Activated B cell treated with CpG ODN at 0.5 μM for 24 hours (primary cell): ENCODE measurements at regions of chr17 and their contacts with region 1.

Region 1: DNA sequence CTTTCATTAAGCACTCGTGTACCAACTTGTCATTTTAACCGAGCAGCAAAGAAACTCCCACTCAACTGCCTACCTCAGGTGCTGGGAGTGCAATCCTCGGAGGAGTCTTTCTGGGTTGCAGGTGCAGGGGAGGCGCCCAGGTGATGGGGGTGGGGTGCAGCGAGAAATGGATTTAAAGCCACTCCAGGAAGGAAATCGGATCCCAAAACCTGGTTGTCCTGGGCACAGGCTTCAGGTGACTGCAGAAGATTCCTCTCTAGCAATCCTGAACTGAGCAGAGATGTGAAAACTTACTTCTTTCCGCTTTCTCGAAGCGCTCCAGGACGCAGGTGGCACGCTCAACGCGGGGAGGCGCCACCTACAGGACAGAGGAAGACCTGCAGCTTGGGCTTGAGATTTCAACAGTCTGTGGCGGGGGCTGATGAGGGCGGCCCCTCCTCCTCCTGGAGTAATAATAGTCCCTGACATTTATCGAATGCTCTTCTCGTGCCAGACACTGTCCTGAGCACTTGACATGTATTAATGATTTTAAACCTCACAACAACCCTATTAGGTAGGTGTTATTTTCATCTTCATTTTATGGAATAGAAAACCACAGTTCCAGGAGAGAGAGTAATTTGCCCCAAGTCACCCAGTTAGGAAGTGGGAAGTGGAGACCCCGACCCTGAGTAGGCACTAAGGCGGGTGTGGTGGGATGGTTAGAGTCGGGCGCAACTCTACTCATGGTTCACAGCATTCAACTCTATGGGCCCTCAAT is 27.2 kb upstream of the SKAP1 start:
- DNase-seq: peak; percentile 60
- ATAC-seq: peak; percentile 100
- H3K4me3 Mint-ChIP-seq: peak overlapping the region; percentile 50
- H3K27ac Mint-ChIP-seq: no peak overlapping the region
- H3K4me1 Mint-ChIP-seq: peaks cover 35% of the 10 kb centered on the region
- H3K27me3 Mint-ChIP-seq: peaks cover 5% of the 10 kb centered on the region
- CTCF ChIP-seq: peak; percentile 88

Region 2: DNA sequence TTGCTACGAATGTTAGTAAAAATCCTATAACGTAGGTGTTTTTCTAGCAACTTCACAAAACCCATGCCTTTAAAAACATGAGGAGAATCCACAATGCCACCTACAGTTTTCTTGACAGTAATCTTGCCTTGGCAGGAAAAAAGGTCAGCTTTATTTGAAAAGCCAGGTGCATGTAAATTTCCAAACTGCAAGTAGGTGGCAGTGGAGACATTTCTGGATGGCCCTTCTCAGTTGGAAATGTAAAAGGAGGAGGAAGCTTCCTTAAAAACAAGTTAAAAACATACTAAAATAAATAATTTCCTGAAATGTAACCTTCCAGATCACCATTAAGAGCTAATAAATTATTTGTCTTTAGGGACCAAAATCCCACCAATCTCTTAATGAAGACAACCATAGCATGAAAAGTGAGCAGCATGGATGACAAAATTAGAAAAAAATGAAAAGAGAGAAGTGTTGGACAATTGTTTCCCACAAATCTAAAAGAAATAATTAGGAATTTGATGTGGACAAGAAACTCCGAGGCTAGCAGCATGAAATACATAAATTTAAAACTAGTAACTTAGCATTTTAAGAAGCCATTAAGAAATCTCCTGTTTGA is 197.5 kb before region 1 on chr17:
- CTCF ChIA-PET with region 1: no interaction called
- POLR2A ChIA-PET with region 1: no interaction called
- intact Hi-C with region 1: no loop called
- DNase-seq: no peak
- ATAC-seq: no peak
- H3K4me3 Mint-ChIP-seq: no peak overlapping the region
- H3K27ac Mint-ChIP-seq: no peak overlapping the region
- H3K4me1 Mint-ChIP-seq: no peaks in the 10 kb centered on the region
- H3K27me3 Mint-ChIP-seq: no peaks in the 10 kb centered on the region
- CTCF ChIP-seq: no peak

Region 3: DNA sequence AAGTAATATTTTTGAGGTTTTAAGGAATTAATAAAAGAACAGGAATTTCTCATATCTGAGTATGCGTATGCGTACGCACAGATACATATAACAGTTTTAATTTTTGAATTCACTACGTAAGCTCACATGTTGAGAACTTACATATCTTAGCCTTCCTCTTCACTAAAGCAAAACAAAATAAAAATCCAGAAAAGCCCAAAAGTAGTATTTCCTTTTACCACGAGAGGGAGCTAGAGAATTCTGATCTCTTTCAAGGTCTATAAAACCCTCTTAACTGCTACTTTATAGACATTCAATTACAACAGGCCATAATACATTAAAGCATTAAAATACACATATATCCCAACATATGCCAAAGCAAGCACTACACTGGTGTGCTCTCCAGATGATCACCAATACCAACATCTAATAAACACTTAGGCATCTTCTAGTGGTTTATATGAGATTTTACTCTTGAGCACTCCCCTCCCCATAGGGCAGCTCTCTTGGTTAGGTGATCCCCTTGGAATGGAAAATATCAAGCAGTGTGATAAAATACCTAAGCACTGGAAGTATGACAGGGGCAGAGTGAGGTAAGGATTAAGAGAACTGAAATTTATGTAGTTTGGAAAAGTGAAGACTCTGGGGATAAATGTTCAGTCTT is 121.3 kb before region 1 on chr17:
- CTCF ChIA-PET with region 1: interaction called, 9 read pairs
- POLR2A ChIA-PET with region 1: no interaction called
- intact Hi-C with region 1: loop called (anchors 1 kb)
- DNase-seq: no peak
- ATAC-seq: peak; percentile 47
- H3K4me3 Mint-ChIP-seq: no peak overlapping the region
- H3K27ac Mint-ChIP-seq: no peak overlapping the region
- H3K4me1 Mint-ChIP-seq: no peaks in the 10 kb centered on the region
- H3K27me3 Mint-ChIP-seq: no peaks in the 10 kb centered on the region
- CTCF ChIP-seq: peak; percentile 60

Region 4: DNA sequence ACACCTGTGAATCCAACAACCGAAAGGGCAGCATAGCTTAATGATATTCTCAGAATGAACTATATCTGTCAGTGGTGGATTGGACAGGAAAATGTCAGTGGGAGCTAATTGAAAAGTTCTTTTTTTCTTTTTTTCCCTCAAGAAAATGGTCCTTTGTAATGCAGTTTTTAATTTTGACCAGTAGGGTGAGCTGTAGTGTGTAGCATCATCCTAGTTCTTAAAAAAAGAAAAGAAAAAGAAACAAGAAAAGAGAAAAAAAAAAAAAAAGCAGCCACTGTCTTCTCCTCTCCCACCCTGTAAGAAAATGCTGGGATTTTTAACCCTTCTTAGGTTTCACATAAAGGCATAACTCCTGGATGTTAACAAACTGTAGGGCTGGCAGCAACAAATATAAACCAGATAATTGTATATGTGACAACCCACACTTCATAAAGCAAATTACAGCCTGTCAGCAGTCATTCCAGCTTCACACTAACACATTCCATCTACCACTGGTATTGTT is 105.4 kb before region 1 on chr17:
- CTCF ChIA-PET with region 1: interaction called, 45 read pairs
- POLR2A ChIA-PET with region 1: interaction called, 3 read pairs
- intact Hi-C with region 1: loop called (anchors 1 kb)
- DNase-seq: no peak
- ATAC-seq: peak; percentile 57
- H3K4me3 Mint-ChIP-seq: no peak overlapping the region
- H3K27ac Mint-ChIP-seq: no peak overlapping the region
- H3K4me1 Mint-ChIP-seq: peaks cover 3% of the 10 kb centered on the region
- H3K27me3 Mint-ChIP-seq: no peaks in the 10 kb centered on the region
- CTCF ChIP-seq: peak; percentile 33

Region 5: GRCh38 chr17:48374650-48375230 is 82.5 kb before region 1 on chr17:
- CTCF ChIA-PET with region 1: interaction called, 10 read pairs
- POLR2A ChIA-PET with region 1: no interaction called
- intact Hi-C with region 1: no loop called
- DNase-seq: no peak
- ATAC-seq: peak; percentile 51
- H3K4me3 Mint-ChIP-seq: no peak overlapping the region
- H3K27ac Mint-ChIP-seq: peak overlapping the region; percentile 80
- H3K4me1 Mint-ChIP-seq: peaks cover 23% of the 10 kb centered on the region
- H3K27me3 Mint-ChIP-seq: no peaks in the 10 kb centered on the region
- CTCF ChIP-seq: no peak

Region 6: GRCh38 chr17:48413613-48414405 is 43.4 kb before region 1 on chr17:
- CTCF ChIA-PET with region 1: interaction called, 8 read pairs
- POLR2A ChIA-PET with region 1: no interaction called
- intact Hi-C with region 1: loop called (anchors 2 kb)
- DNase-seq: no peak
- ATAC-seq: peak; percentile 83
- H3K4me3 Mint-ChIP-seq: peak overlapping the region; percentile 57
- H3K27ac Mint-ChIP-seq: peak overlapping the region; percentile 88
- H3K4me1 Mint-ChIP-seq: peaks cover 60% of the 10 kb centered on the region
- H3K27me3 Mint-ChIP-seq: peaks cover 2% of the 10 kb centered on the region
- CTCF ChIP-seq: no peak

Region 7: DNA sequence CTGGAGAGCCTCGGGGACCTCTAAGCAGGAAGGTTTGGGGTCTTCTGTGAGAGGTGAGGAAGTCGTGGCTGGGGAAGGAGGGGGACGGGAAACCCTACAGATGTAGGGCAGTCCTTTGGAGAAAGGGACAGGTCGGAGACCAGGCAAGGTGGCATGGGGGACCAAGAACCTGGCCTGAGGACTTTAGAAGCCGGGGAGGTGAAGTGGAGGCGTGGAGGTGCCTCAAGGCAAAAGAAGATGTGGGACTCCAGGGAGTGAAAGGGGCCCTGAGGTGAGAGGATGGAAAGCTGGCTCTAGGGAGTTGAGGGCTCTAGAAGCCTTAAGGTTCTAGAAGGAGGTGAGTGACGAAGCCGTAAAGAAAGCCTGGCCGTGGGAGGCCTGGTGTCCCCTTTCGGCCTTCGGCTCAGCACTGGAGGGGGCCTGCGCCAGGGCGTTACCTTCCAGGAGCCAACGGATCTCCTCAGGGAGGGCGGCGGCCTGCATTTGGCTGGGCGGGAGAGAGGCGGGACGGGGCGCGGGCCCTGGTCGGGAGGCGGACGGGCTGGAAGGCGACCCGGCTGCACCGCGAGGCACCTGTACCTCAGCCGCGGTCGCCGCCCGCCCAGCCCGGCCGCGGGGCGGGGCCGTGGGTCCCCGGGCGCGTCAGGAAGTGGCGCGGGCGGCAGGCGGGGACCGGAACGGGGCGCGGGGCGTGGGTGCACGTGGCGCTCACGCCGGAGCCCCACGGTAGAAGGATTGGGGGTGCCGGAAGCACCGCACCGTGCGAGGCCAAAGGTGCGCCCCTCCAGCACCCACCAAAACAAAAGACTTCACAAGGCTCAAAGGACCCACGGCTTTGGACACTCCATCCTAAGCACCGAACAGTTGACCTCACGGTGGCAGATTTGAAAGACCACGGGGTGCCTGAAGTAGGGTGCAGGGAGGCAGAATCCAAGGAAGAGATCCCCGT is 27.3 kb before region 1 on chr17 and contains the start of gene SKAP1:
- CTCF ChIA-PET with region 1: interaction called, 4 read pairs
- POLR2A ChIA-PET with region 1: no interaction called
- intact Hi-C with region 1: loop called (anchors 1 kb)
- DNase-seq: peak; percentile 61
- ATAC-seq: peak; percentile 90
- H3K4me3 Mint-ChIP-seq: peak within 1 kb of the TSS; percentile 86
- H3K27ac Mint-ChIP-seq: peak within 1 kb of the TSS; percentile 83
- H3K4me1 Mint-ChIP-seq: peaks cover 67% of the 10 kb centered on the region
- H3K27me3 Mint-ChIP-seq: peaks cover 8% of the 10 kb centered on the region
- CTCF ChIP-seq: no peak
- total RNA-seq, gene SKAP1: 24.3 and 25.3 TPM in 2 replicates

Region 8: DNA sequence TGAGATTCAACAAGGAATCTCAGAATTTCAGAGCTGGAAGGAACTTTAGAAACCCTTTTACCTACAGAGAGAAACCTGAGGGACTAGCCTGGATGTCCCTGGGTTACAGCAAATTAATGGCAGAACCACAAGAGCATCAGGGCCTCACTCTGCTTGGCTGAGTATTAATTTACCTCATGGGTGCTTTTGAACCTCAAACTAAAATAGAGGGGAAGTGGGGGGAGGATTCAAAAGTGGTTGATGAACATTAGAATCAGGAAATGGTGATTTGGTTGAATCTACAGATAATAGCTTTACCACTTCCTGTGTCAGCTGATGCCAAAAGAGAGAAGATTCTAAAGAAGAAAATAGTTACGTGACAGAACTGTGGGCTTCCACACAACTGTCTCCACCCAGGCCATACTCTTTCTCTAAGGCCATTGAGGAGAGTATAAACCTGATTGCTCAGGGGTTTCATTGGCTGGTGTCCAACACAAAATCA is 16.0 kb before region 1 on chr17:
- CTCF ChIA-PET with region 1: interaction called, 12 read pairs
- POLR2A ChIA-PET with region 1: interaction called, 6 read pairs
- intact Hi-C with region 1: loop called (anchors 1 kb)
- DNase-seq: no peak
- ATAC-seq: peak; percentile 75
- H3K4me3 Mint-ChIP-seq: peak overlapping the region; percentile 55
- H3K27ac Mint-ChIP-seq: peak overlapping the region; percentile 92
- H3K4me1 Mint-ChIP-seq: peaks cover 88% of the 10 kb centered on the region
- H3K27me3 Mint-ChIP-seq: peaks cover 5% of the 10 kb centered on the region
- CTCF ChIP-seq: no peak